Naive thymus-derived CD4-positive, alpha-beta T cell (primary cell): ENCODE measurements at regions of chr2 and their contacts with region 1.

Region 1: DNA sequence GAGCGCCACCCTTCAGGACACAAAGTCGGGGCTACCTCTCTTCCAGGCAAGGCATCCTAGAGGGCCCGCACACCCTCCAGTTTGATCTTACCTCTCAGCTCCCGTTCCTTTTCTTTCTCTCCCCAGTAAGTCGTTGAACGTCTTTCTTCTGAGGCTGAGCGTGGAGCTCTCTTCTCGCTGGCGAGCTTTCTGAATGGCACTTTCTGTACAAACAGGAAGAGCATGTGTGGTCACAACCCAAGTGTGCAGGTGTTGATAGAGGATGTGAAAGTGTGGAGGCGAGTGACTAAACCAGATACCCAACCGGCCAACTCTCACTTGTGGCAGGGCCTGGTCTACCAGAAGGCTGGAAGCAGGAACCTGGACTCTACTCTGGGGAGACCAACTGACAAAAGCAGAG is at the start of gene AFF3:
- DNase-seq: peak; percentile 10 to 63 (median 50)
- ATAC-seq: peak; percentile 74
- H3K4me3 ChIP-seq: peak within 1 kb of the TSS; percentile 80
- H3K4me3 Mint-ChIP-seq: peak within 1 kb of the TSS; percentile 82 to 98 (median 92)
- H3K27ac ChIP-seq: peak within 1 kb of the TSS; percentile 70
- H3K27ac Mint-ChIP-seq: peak within 1 kb of the TSS; percentile 82 to 99 (median 96)
- H3K4me1 ChIP-seq: peaks cover 5 to 30% of the 10 kb centered on the region in 2 donors
- H3K4me1 Mint-ChIP-seq: peaks cover 42 to 75% (median 67%) of the 10 kb centered on the region in 7 donors
- H3K27me3 ChIP-seq: no peaks in the 10 kb centered on the region
- H3K27me3 Mint-ChIP-seq: peaks cover 0 to 32% (median 0%) of the 10 kb centered on the region in 5 donors
- total RNA-seq, gene AFF3: 3.0 to 24.1 (median 19.8) TPM

Region 2: DNA sequence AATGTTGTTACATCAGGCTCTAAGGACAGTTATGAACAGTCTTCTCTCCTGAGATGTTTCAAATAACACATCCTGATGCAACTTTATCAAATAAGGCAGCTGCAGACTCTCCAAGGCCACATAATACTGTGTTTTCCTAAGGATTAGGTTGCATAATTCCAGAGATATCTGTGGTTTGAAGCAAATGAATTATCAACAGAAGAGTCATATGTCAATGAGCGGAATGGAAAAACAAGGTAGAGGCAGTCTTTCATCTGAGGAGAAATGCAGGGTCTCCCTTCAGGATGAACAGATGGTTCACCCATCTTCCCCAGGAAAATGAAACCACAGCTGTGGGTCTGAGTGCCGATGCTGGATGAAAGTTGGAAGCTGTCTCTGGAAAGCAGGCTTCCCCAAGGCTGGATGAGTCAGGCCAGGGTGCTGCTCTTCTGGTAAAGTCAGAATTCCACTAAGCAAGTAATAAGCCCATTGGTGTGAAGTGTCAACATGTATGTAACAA is 863.6 kb before region 1 on chr2:
- CTCF ChIA-PET with region 1: no interaction called
- POLR2A ChIA-PET with region 1: no interaction called
- intact Hi-C with region 1: no loop called
- DNase-seq: no peak
- ATAC-seq: no peak
- H3K4me3 ChIP-seq: no peak overlapping the region
- H3K4me3 Mint-ChIP-seq: no peak overlapping the region
- H3K27ac ChIP-seq: no peak overlapping the region
- H3K27ac Mint-ChIP-seq: no peak overlapping the region
- H3K4me1 ChIP-seq: no peaks in the 10 kb centered on the region
- H3K4me1 Mint-ChIP-seq: no peaks in the 10 kb centered on the region
- H3K27me3 ChIP-seq: no peaks in the 10 kb centered on the region
- H3K27me3 Mint-ChIP-seq: no peaks in the 10 kb centered on the region

Region 3: GRCh38 chr2:99984799-99985515 is 157.4 kb before region 1 on chr2:
- CTCF ChIA-PET with region 1: no interaction called
- POLR2A ChIA-PET with region 1: no interaction called
- intact Hi-C with region 1: no loop called
- DNase-seq: no peak
- ATAC-seq: no peak
- H3K4me3 ChIP-seq: no peak overlapping the region
- H3K4me3 Mint-ChIP-seq: no peak overlapping the region
- H3K27ac ChIP-seq: no peak overlapping the region
- H3K27ac Mint-ChIP-seq: no peak overlapping the region
- H3K4me1 ChIP-seq: no peaks in the 10 kb centered on the region
- H3K4me1 Mint-ChIP-seq: peaks cover 0 to 2% (median 0%) of the 10 kb centered on the region in 7 donors
- H3K27me3 ChIP-seq: no peaks in the 10 kb centered on the region
- H3K27me3 Mint-ChIP-seq: no peaks in the 10 kb centered on the region

Region 4: DNA sequence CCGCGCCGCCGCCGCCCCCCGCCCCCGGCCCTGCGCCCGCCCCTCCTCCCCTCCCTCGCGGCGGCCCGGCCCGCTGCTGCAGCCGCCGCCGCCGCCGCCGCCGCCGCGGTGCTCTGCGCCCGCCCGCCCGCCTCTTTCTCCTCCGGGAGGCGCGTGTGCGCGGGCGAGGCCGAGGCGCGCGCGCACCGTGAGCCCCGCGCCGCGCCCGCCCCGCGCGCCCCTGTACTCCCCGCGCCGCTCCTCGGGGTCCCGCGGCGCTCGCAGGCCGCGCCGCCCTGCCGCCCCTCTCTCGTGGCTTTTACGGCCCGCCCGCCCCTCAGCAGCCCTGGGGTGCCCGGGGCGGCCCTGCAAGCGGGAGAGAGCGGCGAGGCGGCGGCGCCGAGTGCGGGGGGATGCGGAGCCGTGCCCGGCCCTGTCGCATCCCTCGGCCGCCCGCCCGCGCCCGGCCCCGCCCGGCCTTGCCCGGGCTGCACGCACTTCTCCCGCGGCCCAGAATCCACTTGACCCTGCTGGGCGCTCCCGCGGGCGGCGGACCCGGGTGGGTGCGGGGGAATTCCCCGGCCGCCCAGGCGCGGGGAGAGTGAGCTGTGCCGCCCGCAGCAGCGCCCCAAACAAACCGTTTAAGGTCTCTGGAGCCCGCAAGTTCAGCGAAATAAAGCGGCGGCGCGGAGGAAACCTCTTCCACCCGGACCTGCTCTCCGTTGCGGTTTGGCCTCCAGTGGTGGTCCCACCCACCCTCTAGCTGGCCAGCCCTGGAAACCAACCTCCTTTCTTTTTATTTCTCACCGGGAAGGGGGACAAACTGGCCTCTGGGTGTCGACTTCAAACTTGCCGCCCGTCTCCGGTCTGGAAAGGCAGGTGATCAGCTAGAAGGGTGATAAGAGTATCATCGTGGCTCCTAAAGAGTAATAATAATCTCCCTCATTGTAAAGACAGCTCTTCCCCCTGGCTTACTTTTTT is 37.4 kb before region 1 on chr2:
- CTCF ChIA-PET with region 1: no interaction called
- POLR2A ChIA-PET with region 1: no interaction called
- intact Hi-C with region 1: loop called in 1 of 2 experiments (anchors 1 kb)
- DNase-seq: peak; percentile 13 to 53 (median 30)
- ATAC-seq: peak; percentile 81
- H3K4me3 ChIP-seq: peak overlapping the region; percentile 37
- H3K4me3 Mint-ChIP-seq: peak overlapping the region; percentile 72 to 91 (median 84)
- H3K27ac ChIP-seq: peak overlapping the region; percentile 55
- H3K27ac Mint-ChIP-seq: peak overlapping the region; percentile 29 to 77 (median 60)
- H3K4me1 ChIP-seq: peaks cover 0 to 4% of the 10 kb centered on the region in 2 donors
- H3K4me1 Mint-ChIP-seq: peaks cover 4 to 12% (median 8%) of the 10 kb centered on the region in 7 donors
- H3K27me3 ChIP-seq: no peaks in the 10 kb centered on the region
- H3K27me3 Mint-ChIP-seq: peaks cover 0 to 34% (median 9%) of the 10 kb centered on the region in 5 donors